ENCODE measurements at regions of chr9 and their contacts with region 1.

Region 1: GRCh38 chr9:93682232-93682968 is 106.0 kb downstream of the PHF2 start:
- DNase-seq: peak; percentile 88

Region 2: GRCh38 chr9:93438003-93438402 is 244.4 kb before region 1 on chr9:
- intact Hi-C with region 1: no loop called
- DNase-seq: no peak

Region 3: DNA sequence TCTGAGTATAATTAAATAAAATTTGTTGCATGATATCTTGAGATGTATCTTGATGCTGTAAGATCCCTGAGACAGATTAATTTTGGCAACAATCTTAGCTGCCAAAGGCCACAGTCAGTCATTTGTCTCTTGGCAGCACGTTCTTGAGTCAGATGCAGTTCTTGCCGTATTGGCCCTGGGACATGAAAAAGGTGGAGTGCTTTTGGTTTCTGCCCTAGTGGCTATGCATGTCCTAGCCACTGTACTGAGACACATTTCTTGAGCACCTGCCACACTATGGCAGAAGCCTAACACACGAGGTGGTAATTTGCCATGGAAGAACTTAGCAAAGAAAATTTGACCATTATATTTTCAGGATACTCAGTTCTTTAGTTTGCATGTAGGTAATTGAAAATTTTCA is 151.0 kb before region 1 on chr9:
- intact Hi-C with region 1: no loop called
- DNase-seq: no peak

Region 4: DNA sequence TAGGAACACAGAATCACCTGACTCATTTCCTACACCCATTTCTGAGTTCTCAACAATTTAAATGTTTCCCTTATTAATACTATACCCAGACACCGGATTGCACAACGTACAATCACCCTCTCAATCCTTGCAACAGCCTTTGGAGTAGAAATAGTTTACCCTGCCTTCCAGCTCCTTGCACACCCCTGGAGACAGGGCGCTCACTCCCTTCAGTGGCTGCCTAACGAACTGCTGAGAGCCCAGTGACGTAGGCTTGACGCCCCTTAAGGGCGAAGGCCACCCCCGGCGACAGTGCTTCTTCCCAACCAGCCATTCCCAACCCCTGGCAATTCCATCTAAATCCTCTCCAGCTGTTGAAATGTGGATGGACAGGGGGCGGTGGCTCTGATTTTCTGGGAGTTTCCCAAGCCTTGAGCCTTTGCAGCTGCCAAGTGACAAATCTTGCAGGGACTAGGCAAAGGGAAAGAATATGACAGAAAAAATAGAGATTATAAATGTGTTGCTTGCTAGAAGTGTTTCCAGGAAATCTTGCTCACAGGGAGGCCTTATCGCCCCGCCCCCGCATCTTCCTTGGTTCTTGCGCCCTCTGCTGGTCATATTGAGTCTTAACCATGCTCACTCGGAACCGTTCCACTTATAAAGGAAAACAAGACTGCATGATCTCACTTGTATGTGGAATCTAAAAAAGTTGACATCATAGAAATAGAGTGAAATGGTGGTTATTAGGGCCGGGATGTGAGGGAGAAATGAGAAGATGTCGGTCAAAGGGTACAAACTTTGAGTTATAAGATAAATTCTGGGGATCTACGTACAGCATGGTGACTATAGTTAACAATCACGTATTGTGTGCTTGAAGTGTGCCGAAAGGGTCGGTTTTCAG is 280.4 kb after region 1 on chr9:
- intact Hi-C with region 1: loop called (anchors 2 to 5 kb)
- DNase-seq: peak; percentile 93

Region 5: GRCh38 chr9:94199776-94200175 is 517.4 kb after region 1 on chr9:
- intact Hi-C with region 1: loop called in 1 of 2 experiments (anchors 10 kb)
- DNase-seq: no peak

Region 6: DNA sequence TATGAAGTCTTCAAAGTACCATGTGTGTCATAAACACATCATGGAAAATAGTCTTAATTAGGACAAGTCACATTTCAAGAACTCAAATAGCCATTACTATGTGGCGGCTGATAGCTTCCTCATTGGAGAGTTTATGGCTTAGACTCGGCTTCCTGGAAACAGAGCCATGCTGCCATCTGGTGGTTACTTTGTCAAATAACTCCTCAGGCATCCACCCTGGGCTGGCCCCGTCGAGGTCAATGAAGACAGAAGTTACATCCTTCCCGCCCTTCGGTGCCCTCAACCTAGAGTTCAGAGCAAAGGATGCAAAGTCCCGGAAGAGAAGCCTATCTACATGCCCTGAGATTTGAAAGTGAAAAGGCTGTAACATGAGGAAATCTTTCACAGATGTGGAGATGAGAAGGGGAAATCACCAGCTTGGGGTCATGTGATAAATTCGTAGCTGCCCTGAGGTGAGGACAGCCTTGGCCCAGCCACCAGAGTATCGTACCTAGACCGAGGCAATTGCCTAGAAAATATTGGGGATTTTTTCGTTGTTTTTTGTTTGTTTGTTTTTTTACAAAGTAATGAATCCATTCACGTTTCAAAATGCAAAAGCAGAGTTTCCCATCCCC is 531.2 kb after region 1 on chr9:
- intact Hi-C with region 1: loop called (anchors 10 kb)
- DNase-seq: peak; percentile 88

Region 7: GRCh38 chr9:94922098-94922607 is 1239.8 kb after region 1 on chr9:
- intact Hi-C with region 1: loop called in 1 of 2 experiments (anchors 5 kb)
- DNase-seq: peak; percentile 94

Measured in posterior vena cava (tissue), 2 donors.